ENCODE measurements at regions of chr5 and their contacts with region 1.

Region 1: GRCh38 chr5:85967684-85968083 is 650.1 kb upstream of the COX7C start:
- DNase-seq: no peak
- H3K4me3 ChIP-seq: no peak overlapping the region
- H3K27ac ChIP-seq: no peak overlapping the region
- H3K4me1 ChIP-seq: no peaks in the 10 kb centered on the region
- H3K27me3 ChIP-seq: no peaks in the 10 kb centered on the region
- CTCF ChIP-seq: no peak

Region 2: DNA sequence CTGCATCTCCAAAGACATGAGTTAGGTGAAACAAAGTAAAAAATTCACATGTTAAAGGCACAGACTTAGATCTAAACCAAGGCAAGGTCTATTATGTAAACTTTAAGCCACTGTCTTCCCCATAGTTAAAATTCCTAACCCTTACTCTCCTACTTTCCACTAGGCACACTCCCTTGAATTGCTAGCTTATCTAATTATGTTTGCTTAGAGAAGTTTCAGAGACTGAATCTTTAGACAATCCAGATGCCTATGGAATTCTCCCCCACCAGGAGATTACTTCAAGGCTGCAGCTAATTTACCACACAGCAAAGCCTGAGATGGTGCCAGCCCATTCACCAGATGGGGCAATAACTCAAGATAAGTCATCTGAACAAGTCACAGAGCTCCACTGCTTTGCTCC is 153.1 kb before region 1 on chr5:
- intact Hi-C with region 1: loop called (anchors 10 kb)
- DNase-seq: no peak
- H3K4me3 ChIP-seq: no peak overlapping the region
- H3K27ac ChIP-seq: no peak overlapping the region
- H3K4me1 ChIP-seq: no peaks in the 10 kb centered on the region
- H3K27me3 ChIP-seq: no peaks in the 10 kb centered on the region
- CTCF ChIP-seq: no peak

Region 3: GRCh38 chr5:86523718-86524117 is 556.0 kb after region 1 on chr5:
- intact Hi-C with region 1: no loop called
- DNase-seq: no peak
- H3K4me3 ChIP-seq: no peak overlapping the region
- H3K27ac ChIP-seq: no peak overlapping the region
- H3K4me1 ChIP-seq: no peaks in the 10 kb centered on the region
- H3K27me3 ChIP-seq: no peaks in the 10 kb centered on the region
- CTCF ChIP-seq: no peak

Measured in ascending aorta (tissue), 2 donors.